ENCODE measurements at regions of chr16 and their contacts with region 1.

Region 1: GRCh38 chr16:49855280-49855821 is 561 bp downstream of the ZNF423 start:
- DNase-seq: peak; percentile 89 to 96
- ATAC-seq: peak; percentile 74 to 79 (median 75)
- H3K4me3 ChIP-seq: peak overlapping the region; percentile 74
- H3K27ac ChIP-seq: peak overlapping the region; percentile 90
- H3K4me1 ChIP-seq: peaks cover 33% of the 10 kb centered on the region
- H3K27me3 ChIP-seq: no peaks in the 10 kb centered on the region
- CTCF ChIP-seq: no peak

Region 2: GRCh38 chr16:48347191-48347865 is 1508.0 kb before region 1 on chr16:
- intact Hi-C with region 1: loop called in 1 of 2 experiments (anchors 10 kb)
- DNase-seq: no peak
- ATAC-seq: no peak
- H3K4me3 ChIP-seq: no peak overlapping the region
- H3K27ac ChIP-seq: no peak overlapping the region
- H3K4me1 ChIP-seq: no peaks in the 10 kb centered on the region
- H3K27me3 ChIP-seq: no peaks in the 10 kb centered on the region
- CTCF ChIP-seq: no peak

Region 3: GRCh38 chr16:49491771-49492761 is 363.3 kb before region 1 on chr16:
- intact Hi-C with region 1: loop called in 1 of 2 experiments (anchors 5 kb)
- DNase-seq: peak; percentile 68 to 82
- ATAC-seq: peak; percentile 75 to 92 (median 84)
- H3K4me3 ChIP-seq: peak overlapping the region; percentile 47
- H3K27ac ChIP-seq: no peak overlapping the region
- H3K4me1 ChIP-seq: no peaks in the 10 kb centered on the region
- H3K27me3 ChIP-seq: no peaks in the 10 kb centered on the region
- CTCF ChIP-seq: peak; percentile 88

Region 4: GRCh38 chr16:49602201-49602975 is 253.0 kb before region 1 on chr16:
- intact Hi-C with region 1: loop called in 1 of 2 experiments (anchors 5 kb)
- DNase-seq: peak; percentile 41 to 57
- ATAC-seq: peak; percentile 50 to 67 (median 63)
- H3K4me3 ChIP-seq: peak overlapping the region; percentile 29
- H3K27ac ChIP-seq: peak overlapping the region; percentile 14
- H3K4me1 ChIP-seq: peaks cover 20% of the 10 kb centered on the region
- H3K27me3 ChIP-seq: no peaks in the 10 kb centered on the region
- CTCF ChIP-seq: no peak

Region 5: GRCh38 chr16:49811644-49812334 is 43.6 kb before region 1 on chr16:
- intact Hi-C with region 1: loop called (anchors 5 kb)
- DNase-seq: peak; percentile 68 to 88
- ATAC-seq: peak; percentile 87 to 92 (median 90)
- H3K4me3 ChIP-seq: peak overlapping the region; percentile 41
- H3K27ac ChIP-seq: peak overlapping the region; percentile 74
- H3K4me1 ChIP-seq: peaks cover 67% of the 10 kb centered on the region
- H3K27me3 ChIP-seq: no peaks in the 10 kb centered on the region
- CTCF ChIP-seq: no peak

Region 6: DNA sequence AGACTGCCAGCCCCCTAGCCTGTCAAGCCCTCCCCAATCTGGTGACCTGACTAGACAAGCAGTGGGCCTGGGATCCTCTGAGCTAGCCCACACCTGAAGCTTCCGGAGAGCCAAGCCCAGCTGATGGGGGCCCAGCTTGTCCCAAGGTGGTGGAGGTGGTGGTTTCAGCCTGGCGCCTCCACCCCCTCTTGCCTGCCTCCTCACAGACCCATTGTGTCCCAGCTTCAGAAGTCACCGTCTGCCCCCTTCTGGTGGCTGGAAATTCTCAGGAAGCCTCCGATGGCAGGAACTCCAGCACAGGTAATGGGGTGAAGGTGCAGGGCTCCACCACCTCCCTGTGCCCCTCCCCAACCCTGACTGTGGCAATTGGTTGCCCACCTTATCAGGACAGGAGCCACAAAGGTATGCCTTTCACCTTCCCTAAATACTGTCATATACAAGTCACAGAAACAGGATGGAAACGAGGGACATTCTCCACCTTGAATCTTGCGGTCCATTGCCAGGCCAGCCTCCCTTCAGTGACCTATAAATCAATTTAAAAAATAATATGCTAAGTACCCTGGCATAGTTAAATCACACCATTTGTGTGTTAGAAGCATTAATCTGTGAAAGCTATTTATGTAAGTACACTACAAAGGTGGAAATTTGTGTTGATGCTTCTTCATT is 66.6 kb after region 1 on chr16:
- intact Hi-C with region 1: loop called in 1 of 2 experiments (anchors 1 kb)
- DNase-seq: peak; percentile 40 to 60
- ATAC-seq: peak; percentile 67 to 83 (median 77)
- H3K4me3 ChIP-seq: no peak overlapping the region
- H3K27ac ChIP-seq: no peak overlapping the region
- H3K4me1 ChIP-seq: no peaks in the 10 kb centered on the region
- H3K27me3 ChIP-seq: no peaks in the 10 kb centered on the region
- CTCF ChIP-seq: peak; percentile 59